Motor neuron (in vitro differentiated cells): ENCODE measurements at regions of chr7 and their contacts with region 1.

Region 1: GRCh38 chr7:44200647-44201461 is at the start of gene YKT6:
- ATAC-seq: peak; percentile 95 to 99 (median 97)
- H3K4me3 ChIP-seq: peak within 1 kb of the TSS; percentile 65 to 99 (median 77)
- H3K27ac ChIP-seq: peak within 1 kb of the TSS; percentile 80 to 97
- H3K4me1 ChIP-seq: peaks cover 0 to 12% of the 10 kb centered on the region in 2 donors
- total RNA-seq, gene YKT6: 66.9 to 121 (median 96.7) TPM

Region 2: GRCh38 chr7:44044315-44045225 is 156.3 kb before region 1 on chr7 and contains the start of gene DBNL:
- in situ Hi-C with region 1: loop called in 1 of 9 experiments (anchors 25 kb)
- ATAC-seq: peak; percentile 72 to 94 (median 88)
- H3K4me3 ChIP-seq: peak within 1 kb of the TSS; percentile 82 to 97 (median 90)
- H3K27ac ChIP-seq: peak within 1 kb of the TSS; percentile 86 to 91
- H3K4me1 ChIP-seq: peaks cover 9 to 15% of the 10 kb centered on the region in 2 donors
- total RNA-seq, gene DBNL: 37.3 to 99.0 (median 70.9) TPM

Region 3: DNA sequence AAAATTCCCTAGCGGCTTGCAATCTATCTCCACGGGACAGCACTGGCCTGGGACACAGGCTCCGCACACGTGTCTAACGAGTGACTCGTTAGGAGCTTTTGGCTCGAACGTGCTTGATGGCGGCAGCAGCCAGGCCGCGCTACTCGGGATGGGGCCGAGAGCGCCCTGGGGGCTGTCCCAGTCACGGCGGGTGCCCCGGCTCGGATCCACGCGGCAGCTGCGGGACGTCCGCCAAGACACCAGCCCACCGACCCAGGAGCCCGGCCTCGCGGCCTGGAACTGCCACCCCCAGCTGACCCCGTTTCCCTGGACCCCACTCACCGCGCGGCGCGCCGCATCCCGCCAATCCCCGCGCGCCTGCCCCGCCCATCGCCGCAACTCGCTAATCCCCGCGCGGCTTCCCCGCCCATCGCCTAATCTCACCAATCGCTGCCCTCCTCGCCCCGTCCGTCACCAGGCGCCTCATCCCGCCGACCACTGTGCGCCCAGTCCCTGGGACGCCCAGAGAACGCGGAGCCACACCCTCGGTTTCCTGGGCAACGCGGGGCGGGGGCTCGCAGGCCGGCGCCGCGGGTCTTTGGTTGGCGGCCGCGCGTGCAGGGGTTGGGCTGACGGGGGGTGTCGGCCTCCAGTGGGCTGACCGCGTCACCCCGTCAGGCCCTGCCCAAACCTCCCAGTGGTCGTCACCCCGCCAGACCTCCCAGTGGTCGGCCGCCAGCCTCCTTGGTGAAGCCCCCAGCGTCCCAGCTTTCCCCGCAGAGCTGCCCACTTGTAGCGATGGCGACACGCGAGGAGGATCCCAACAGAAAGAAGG is 77.5 kb before region 1 on chr7 and contains the start of gene POLD2:
- in situ Hi-C with region 1: loop called in 1 of 9 experiments (anchors 10 kb)
- ATAC-seq: peak; percentile 96 to 98 (median 98)
- H3K4me3 ChIP-seq: peak within 1 kb of the TSS; percentile 60 to 88 (median 80)
- H3K27ac ChIP-seq: peak within 1 kb of the TSS; percentile 69 to 78
- H3K4me1 ChIP-seq: peaks cover 6 to 10% of the 10 kb centered on the region in 2 donors
- total RNA-seq, gene POLD2: 53.7 to 146 (median 73.7) TPM

Region 4: GRCh38 chr7:44490351-44491200 is 289.7 kb after region 1 on chr7 and contains the start of gene NUDCD3:
- in situ Hi-C with region 1: loop called in 2 of 9 experiments (anchors 25 kb)
- ATAC-seq: peak; percentile 93 to 99 (median 98)
- H3K4me3 ChIP-seq: peak within 1 kb of the TSS; percentile 58 to 97 (median 80)
- H3K27ac ChIP-seq: peak within 1 kb of the TSS; percentile 98 to 100
- H3K4me1 ChIP-seq: peaks cover 10 to 16% of the 10 kb centered on the region in 2 donors
- total RNA-seq, gene NUDCD3: 44.8 to 69.6 (median 52.0) TPM

Region 5: DNA sequence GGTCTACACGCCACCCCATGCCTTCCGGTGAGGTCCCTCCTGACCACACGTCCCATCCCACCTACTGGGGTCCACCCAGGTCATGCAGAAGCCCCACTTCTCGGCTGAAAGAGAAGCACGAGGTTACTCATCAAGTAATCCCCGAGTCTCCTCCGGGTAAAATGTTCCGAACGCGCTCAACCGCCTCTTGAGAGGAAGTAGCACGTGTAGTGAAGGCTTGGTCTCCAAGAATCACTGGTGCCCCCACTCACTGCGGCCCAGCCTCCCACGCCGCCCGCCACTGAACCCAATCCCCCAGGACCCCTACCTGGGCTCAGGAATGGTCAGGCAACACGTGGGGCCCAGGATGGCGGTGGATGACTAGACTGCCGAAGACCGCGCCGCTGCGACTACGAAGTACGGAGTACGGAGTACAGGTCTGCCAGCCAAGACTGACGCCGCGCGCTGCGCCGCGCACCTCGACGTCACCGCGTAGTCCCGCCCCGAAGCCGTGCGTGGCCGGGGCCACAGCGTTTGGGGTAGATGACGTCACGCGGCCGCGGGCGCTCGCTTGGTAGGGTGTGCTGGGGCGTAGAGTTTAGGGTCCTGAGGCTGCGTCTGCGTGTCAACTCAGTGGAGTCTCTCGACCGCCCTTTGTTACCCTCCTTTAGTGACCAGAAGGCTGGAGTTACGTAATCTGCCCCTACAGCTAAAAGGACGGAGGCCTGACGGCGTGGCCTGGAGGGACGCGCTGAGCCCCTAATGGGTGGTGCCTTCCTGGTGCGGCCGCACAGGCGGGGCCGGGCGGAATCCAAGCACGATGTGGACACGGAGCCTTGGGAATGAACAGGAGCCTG is 785.6 kb after region 1 on chr7:
- in situ Hi-C with region 1: no loop called
- ATAC-seq: peak; percentile 70 to 97 (median 96)
- H3K4me3 ChIP-seq: peak overlapping the region; percentile 47 to 72 (median 50)
- H3K27ac ChIP-seq: peak overlapping the region; percentile 76 to 93
- H3K4me1 ChIP-seq: peaks cover 28 to 32% of the 10 kb centered on the region in 2 donors